Activated CD4-positive, alpha-beta memory T cell treated with anti-CD3 and anti-CD28 coated beads, Interleukin-2, amount 10 ng/mL, durations not matched to agents 7 days and 5 days (primary cell): ENCODE measurements at regions of chrX and their contacts with region 1.

Region 1: DNA sequence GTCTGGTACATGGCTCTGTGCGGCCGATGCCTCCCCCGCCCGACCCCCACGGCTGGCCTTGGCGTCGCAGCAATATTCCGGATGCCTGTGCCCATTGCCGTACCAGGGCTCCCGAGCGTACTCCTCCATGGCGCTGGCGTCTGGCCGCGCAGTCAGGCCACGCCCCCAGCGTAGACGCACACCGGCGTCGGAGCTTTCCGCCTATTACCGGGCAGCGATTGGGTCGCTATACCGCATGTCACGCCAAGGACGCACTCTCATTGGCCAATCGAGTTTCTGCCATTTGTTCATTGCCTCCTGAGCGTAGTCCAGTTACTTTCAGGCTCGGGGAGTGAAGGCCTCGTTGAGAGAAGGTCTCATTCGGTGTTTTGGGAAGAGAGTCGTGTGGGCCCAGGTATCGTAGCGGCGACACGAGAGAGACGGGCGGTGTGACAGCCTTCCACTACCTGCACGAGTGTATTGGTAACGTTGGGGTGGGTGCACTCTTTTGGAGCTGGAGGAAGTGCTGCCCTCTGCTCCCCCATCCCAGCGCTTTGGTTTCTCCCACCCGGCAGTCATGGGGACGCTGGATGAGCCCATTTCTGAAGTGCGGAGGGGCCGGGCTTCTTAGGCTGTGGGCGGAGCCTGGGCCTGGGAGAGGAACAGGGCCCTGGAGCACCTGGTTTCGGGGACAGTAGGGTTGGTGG is at the starts of genes PQBP1 and TIMM17B:
- DNase-seq: peak; percentile 90
- H3K4me3 Mint-ChIP-seq: peak within 1 kb of the TSS; percentile 83
- H3K27ac Mint-ChIP-seq: peak within 1 kb of the TSS; percentile 98
- H3K4me1 Mint-ChIP-seq: peaks cover 35% of the 10 kb centered on the region
- H3K27me3 Mint-ChIP-seq: no peaks in the 10 kb centered on the region
- total RNA-seq, gene PQBP1: 78.5 to 79.6 TPM
- total RNA-seq, gene TIMM17B: 55.2 to 60.6 TPM

Region 2: GRCh38 chrX:48789366-48790220 is 108.2 kb before region 1 on chrX:
- CTCF ChIA-PET with region 1: no interaction called
- POLR2A ChIA-PET with region 1: no interaction called
- DNase-seq: no peak
- H3K4me3 Mint-ChIP-seq: no peak overlapping the region
- H3K27ac Mint-ChIP-seq: no peak overlapping the region
- H3K4me1 Mint-ChIP-seq: peaks cover 14% of the 10 kb centered on the region
- H3K27me3 Mint-ChIP-seq: peaks cover 9% of the 10 kb centered on the region

Region 3: GRCh38 chrX:48911412-48912182 is 13.8 kb after region 1 on chrX and contains the start of gene SLC35A2:
- CTCF ChIA-PET with region 1: interaction called, 8 read pairs
- POLR2A ChIA-PET with region 1: interaction called, 51 read pairs
- DNase-seq: peak; percentile 90
- H3K4me3 Mint-ChIP-seq: peak within 1 kb of the TSS; percentile 95
- H3K27ac Mint-ChIP-seq: peak within 1 kb of the TSS; percentile 92
- H3K4me1 Mint-ChIP-seq: peaks cover 48% of the 10 kb centered on the region
- H3K27me3 Mint-ChIP-seq: no peaks in the 10 kb centered on the region
- total RNA-seq, gene SLC35A2: 17.9 to 18.3 TPM